Activated CD4-positive, alpha-beta T cell treated with anti-CD3 and anti-CD28 coated beads, Interleukin-2, amount 10 ng/mL, durations not matched to agents 24 days and 14 days (primary cell): ENCODE measurements at regions of chr4 and their contacts with region 1.

Region 1: GRCh38 chr4:88523325-88524129 is at the start of gene PYURF:
- DNase-seq: peak; percentile 94
- H3K4me3 Mint-ChIP-seq: peak within 1 kb of the TSS; percentile 98
- H3K27ac Mint-ChIP-seq: peak within 1 kb of the TSS; percentile 94
- H3K4me1 Mint-ChIP-seq: peaks cover 37% of the 10 kb centered on the region
- H3K27me3 Mint-ChIP-seq: no peaks in the 10 kb centered on the region
- total RNA-seq, gene PYURF: 54.6 and 57.0 TPM in 2 replicates

Region 2: GRCh38 chr4:88429401-88429800 is 94.1 kb before region 1 on chr4:
- intact Hi-C with region 1: no loop called
- DNase-seq: no peak
- H3K4me3 Mint-ChIP-seq: no peak overlapping the region
- H3K27ac Mint-ChIP-seq: no peak overlapping the region
- H3K4me1 Mint-ChIP-seq: peaks cover 3% of the 10 kb centered on the region
- H3K27me3 Mint-ChIP-seq: no peaks in the 10 kb centered on the region

Region 3: GRCh38 chr4:88533937-88534750 is 10.6 kb after region 1 on chr4:
- intact Hi-C with region 1: loop called (anchors 1 kb)
- DNase-seq: no peak
- H3K4me3 Mint-ChIP-seq: no peak overlapping the region
- H3K27ac Mint-ChIP-seq: no peak overlapping the region
- H3K4me1 Mint-ChIP-seq: peaks cover 6% of the 10 kb centered on the region
- H3K27me3 Mint-ChIP-seq: no peaks in the 10 kb centered on the region

Region 4: DNA sequence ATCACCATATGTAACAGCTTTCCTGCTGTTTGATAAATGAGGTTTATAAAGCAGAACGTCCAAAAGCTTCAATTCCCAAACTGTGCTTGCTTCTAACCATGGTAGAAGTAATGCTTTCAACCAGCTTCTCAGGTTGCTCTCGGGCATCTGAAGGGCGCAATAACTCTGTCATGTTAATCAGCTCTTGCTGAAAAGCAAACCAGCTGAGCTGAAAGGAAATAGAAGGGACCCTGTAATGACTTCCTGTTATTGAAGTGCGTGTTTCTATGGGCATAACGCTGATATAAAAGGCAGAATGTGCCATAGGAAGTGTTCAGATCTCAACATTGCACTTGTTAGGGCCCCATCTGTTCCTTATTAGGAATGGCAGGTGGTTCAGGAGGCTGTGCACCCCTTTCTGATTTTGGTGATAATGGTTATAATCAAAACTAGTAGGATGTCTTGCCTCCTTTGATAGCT is 89.9 kb after region 1 on chr4:
- intact Hi-C with region 1: loop called (anchors 5 kb)
- DNase-seq: peak; percentile 80
- H3K4me3 Mint-ChIP-seq: peak overlapping the region; percentile 73
- H3K27ac Mint-ChIP-seq: peak overlapping the region; percentile 73
- H3K4me1 Mint-ChIP-seq: peaks cover 53% of the 10 kb centered on the region
- H3K27me3 Mint-ChIP-seq: no peaks in the 10 kb centered on the region

Region 5: DNA sequence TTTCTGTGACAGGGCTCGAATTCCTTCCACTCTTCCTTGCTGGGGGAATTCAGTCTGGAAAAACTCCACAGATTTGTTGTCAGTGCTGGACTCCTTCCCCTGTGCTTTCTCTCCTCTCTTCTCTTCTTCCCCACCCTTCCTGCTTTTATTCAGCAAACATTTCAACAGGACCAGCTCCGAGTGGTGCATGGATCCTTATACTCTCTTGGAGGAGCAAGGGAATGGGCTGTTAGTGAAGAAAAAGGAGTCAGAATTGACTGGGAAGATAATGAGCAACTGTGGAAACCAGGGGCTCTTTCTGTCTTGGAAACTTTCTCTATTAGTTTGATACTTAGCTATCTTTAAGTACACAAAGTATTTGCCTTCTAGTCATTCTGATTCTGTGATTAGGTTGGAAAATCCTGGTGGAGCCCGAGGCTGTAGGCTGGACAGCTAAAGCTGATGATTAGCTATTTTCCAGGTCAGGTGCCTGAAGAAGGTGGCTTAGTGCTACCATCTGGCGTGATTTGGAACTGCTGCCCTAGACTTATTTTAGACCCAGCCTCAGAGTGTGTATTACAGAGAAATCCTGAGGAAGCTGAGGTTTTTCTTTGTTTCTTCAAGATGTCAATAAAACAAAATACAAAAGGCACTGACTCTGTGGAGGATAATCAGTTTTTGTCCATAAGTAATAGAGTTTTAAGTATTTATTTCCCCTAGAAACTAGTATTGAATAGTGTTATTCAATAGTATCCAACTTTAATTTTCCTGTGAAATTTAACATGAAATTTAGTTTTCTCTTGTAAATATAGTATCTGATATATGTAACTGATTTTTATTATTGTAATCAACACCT is 135.7 kb after region 1 on chr4:
- intact Hi-C with region 1: loop called (anchors 1 kb)
- DNase-seq: peak; percentile 75
- H3K4me3 Mint-ChIP-seq: no peak overlapping the region
- H3K27ac Mint-ChIP-seq: no peak overlapping the region
- H3K4me1 Mint-ChIP-seq: peaks cover 10% of the 10 kb centered on the region
- H3K27me3 Mint-ChIP-seq: no peaks in the 10 kb centered on the region

Region 6: GRCh38 chr4:88792268-88792781 is 268.8 kb after region 1 on chr4:
- intact Hi-C with region 1: loop called (anchors 5 kb)
- DNase-seq: no peak
- H3K4me3 Mint-ChIP-seq: no peak overlapping the region
- H3K27ac Mint-ChIP-seq: peak overlapping the region; percentile 74
- H3K4me1 Mint-ChIP-seq: peaks cover 15% of the 10 kb centered on the region
- H3K27me3 Mint-ChIP-seq: peaks cover 16% of the 10 kb centered on the region

Region 7: GRCh38 chr4:88803600-88804096 is 280.1 kb after region 1 on chr4:
- intact Hi-C with region 1: loop called (anchors 5 kb)
- DNase-seq: peak; percentile 67
- H3K4me3 Mint-ChIP-seq: no peak overlapping the region
- H3K27ac Mint-ChIP-seq: no peak overlapping the region
- H3K4me1 Mint-ChIP-seq: peaks cover 17% of the 10 kb centered on the region
- H3K27me3 Mint-ChIP-seq: peaks cover 21% of the 10 kb centered on the region